Posterior vena cava (tissue), 2 donors: ENCODE measurements at regions of chr1 and their contacts with region 1.

Region 1: DNA sequence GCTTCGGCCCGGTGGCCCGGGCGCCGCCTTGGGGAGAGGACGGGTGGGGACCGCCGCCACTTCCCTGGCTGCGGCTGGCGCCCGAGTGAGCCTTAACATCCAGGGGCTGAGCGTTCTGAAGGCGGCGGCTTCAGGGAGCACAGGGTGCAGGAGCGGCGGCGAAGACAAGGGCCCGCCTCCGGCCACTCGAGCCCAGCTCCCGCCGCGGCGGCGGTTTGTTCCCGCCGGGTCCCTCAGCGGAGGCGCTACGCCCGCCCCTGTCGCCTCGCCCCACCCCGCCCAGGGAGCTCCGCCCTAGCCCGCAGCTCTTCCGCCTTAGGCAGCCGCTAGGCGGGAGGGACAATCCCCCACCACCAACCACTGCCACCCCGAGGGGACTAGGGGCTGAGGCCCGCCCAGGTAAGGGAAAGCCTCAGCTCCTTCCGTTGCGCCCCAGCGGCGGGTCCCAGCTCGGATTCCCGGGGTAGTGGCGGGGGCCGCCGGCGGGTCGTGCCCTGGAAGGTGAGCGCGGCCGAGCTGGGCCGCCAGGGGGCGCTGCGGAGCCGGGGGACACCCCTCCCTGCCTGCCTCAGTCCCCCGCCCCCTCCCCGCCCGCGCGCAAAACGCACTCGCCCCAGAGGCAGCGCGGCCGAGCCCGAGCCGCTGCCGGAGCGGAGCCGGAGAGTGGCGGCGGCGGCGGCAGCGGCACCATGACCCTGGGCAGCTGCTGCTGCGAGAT is at the start of gene FOXD2:
- DNase-seq: peak; percentile 95
- total RNA-seq, gene FOXD2: 0.19 to 0.37 TPM

Region 2: GRCh38 chr1:47378147-47378546 is 59.5 kb before region 1 on chr1:
- intact Hi-C with region 1: no loop called
- DNase-seq: no peak

Region 3: GRCh38 chr1:47482786-47483185 is 45.2 kb after region 1 on chr1:
- intact Hi-C with region 1: loop called in 1 of 2 experiments (anchors 1 kb)
- DNase-seq: no peak

Region 4: GRCh38 chr1:47569681-47570470 is 132.3 kb after region 1 on chr1:
- intact Hi-C with region 1: loop called in 1 of 2 experiments (anchors 5 kb)
- DNase-seq: no peak